IMR-90 (cell line): ENCODE measurements at regions of chr2 and their contacts with region 1.

Region 1: DNA sequence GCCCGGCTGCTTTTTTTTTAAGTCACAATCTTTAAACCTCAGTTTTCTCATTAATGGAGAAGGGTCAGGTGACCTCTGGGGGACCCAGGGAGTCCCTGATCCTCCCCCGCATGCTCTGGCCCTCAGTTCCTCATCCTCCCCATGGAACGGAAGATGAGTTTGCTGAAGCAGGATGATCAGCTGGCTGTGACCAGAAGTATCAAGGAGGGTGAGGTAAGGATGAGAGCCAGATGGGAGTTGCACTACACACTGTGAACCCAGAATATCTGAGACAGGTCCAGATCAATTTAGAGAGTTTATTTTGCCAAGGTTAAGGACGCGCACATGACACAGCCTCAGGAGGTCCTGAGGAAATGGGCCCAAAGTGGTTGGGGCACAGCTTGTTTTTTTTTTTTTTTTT is 3.8 kb downstream of the CATIP start:
- DNase-seq: no peak
- ATAC-seq: no peak
- H3K4me3 ChIP-seq: no peak overlapping the region
- H3K27ac ChIP-seq: no peak overlapping the region
- H3K4me1 ChIP-seq: peaks cover 2% of the 10 kb centered on the region; the same call in 1 of the 2 replicates
- H3K27me3 ChIP-seq: peaks cover 4% of the 10 kb centered on the region; the same call in 1 of the 2 replicates
- CTCF ChIP-seq: no peak
- POLR2A ChIP-seq: no peak
- RAD21 ChIP-seq: no peak

Region 2: DNA sequence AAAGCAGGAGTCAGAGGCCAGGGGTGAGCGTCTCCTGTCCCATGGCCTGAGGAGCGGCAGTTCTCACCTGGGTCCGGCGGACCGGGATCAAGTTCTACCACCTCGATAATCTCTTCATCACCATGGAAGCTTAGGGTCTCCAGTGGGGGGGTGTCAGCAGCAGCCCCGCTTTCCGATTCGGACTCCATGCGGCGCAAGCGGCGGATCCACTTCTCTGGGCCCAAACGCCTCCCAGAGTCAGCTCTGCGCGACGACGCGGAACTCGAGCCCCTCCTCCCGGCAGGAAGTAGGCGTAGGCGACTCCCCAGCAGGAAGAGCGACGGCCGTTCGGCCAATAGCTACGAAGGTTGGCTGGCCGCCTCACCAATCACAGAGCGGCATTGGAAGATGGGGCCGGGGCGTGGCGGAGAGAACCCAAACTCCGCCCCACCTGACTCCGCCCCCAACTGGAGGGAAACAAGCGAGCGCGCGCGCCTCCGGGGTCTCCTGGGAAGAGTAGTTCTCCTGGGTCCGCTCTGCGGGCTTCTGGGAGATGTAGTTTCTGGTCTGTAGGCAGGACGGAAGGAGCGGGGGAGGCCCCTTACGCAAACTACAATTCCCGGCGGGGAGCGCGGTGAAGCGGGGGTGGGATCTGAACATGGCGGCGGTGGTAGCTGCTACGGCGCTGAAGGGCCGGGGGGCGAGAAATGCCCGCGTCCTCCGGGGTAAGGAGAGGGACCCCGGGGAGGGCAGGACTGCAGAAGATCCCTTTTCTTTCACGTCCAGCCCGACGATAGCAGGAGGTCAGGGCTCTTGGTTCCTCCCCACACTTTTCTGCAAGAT is 90.3 kb before region 1 on chr2 and contains the starts of genes AAMP and PNKD:
- CTCF ChIA-PET with region 1: interaction called, 4 read pairs
- POLR2A ChIA-PET with region 1: no interaction called
- dilution Hi-C with region 1: no loop called
- in situ Hi-C with region 1: no loop called
- intact Hi-C with region 1: loop called (anchors 1 kb)
- DNase-seq: peak; percentile 99
- ATAC-seq: peak; percentile 94
- H3K4me3 ChIP-seq: peak within 1 kb of the TSS; percentile 72
- H3K27ac ChIP-seq: peak within 1 kb of the TSS; percentile 64
- H3K4me1 ChIP-seq: peaks cover 10% of the 10 kb centered on the region
- H3K27me3 ChIP-seq: no peaks in the 10 kb centered on the region
- CTCF ChIP-seq: peak; percentile 28
- POLR2A ChIP-seq: peak; percentile 93
- RAD21 ChIP-seq: no peak
- total RNA-seq, gene AAMP: 112 and 118 TPM in 2 replicates
- total RNA-seq, gene PNKD: 19.2 and 22.2 TPM in 2 replicates

Region 3: GRCh38 chr2:218301176-218301819 is 59.1 kb before region 1 on chr2:
- CTCF ChIA-PET with region 1: interaction called, 4 read pairs
- POLR2A ChIA-PET with region 1: no interaction called
- dilution Hi-C with region 1: no loop called
- in situ Hi-C with region 1: no loop called
- intact Hi-C with region 1: loop called (anchors 1 kb)
- DNase-seq: peak; percentile 82
- ATAC-seq: peak; percentile 93
- H3K4me3 ChIP-seq: no peak overlapping the region
- H3K27ac ChIP-seq: no peak overlapping the region
- H3K4me1 ChIP-seq: peaks cover 4% of the 10 kb centered on the region; the same call in 1 of the 2 replicates
- H3K27me3 ChIP-seq: no peaks in the 10 kb centered on the region
- CTCF ChIP-seq: peak; percentile 93
- POLR2A ChIP-seq: no peak
- RAD21 ChIP-seq: peak; percentile 96